Naive thymus-derived CD4-positive, alpha-beta T cell (primary cell): ENCODE measurements at regions of chr12 and their contacts with region 1.

Region 1: GRCh38 chr12:110403146-110403975 is at the start of gene ANAPC7:
- DNase-seq: peak; percentile 74 to 90 (median 87)
- ATAC-seq: peak; percentile 98
- H3K4me3 ChIP-seq: peak within 1 kb of the TSS; percentile 99
- H3K4me3 Mint-ChIP-seq: peak within 1 kb of the TSS in 9 of 10 donors; percentile 96 to 100 (median 98)
- H3K27ac ChIP-seq: peak within 1 kb of the TSS; percentile 81
- H3K27ac Mint-ChIP-seq: peak within 1 kb of the TSS; percentile 97 to 100 (median 99)
- H3K4me1 ChIP-seq: peaks cover 6 to 15% of the 10 kb centered on the region in 2 donors
- H3K4me1 Mint-ChIP-seq: peaks cover 15 to 50% (median 29%) of the 10 kb centered on the region in 7 donors
- H3K27me3 ChIP-seq: no peaks in the 10 kb centered on the region
- H3K27me3 Mint-ChIP-seq: no peaks in the 10 kb centered on the region
- total RNA-seq, gene ANAPC7: 40.9 to 71.7 (median 59.7) TPM

Region 2: DNA sequence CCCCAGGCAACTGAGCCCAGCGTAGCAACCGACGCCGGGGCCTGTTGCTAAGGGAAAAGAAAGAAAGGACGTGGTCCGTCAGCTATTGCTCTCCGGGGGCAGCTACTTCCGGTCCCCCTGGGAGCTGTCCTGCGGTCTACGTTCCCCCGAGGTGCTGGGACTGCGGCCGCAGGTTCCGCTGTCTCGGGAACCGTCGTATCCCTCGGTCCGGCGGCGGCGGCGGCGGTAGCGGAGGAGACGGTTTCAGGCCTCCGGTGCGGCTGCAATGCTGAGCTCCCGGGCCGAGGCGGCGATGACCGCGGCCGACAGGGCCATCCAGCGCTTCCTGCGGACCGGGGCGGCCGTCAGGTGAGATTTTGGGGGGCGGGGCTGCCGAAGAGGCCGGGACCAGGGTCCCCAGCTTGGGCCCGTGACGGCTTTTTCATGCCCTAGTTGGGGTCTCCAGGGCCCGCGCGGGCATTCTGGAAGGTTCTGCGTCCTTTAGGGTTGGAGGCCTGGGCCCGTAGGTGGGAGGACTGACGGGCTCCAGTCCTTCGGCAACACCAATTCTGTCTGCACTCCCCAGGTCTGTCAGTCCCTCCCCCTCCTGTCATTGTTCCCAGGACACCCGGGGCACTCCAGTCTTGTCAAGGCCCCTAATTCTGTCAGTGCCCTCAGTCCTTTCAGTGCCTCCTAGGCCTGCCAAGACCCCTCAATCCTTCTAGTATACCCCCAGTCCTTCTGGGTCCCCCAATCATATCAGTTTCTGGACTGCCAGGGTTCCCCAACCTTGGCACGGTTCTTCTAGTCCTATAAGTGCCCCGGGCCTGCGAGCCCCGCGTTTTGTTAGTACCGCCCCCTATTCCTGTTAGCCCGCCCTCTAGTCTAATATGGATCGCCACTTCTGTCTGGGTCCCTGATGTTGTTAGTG is 1350.7 kb before region 1 on chr12 and contains the start of gene USP30:
- CTCF ChIA-PET with region 1: no interaction called
- POLR2A ChIA-PET with region 1: no interaction called
- intact Hi-C with region 1: loop called in 1 of 2 experiments (anchors 5 kb)
- DNase-seq: peak; percentile 68 to 86 (median 77)
- ATAC-seq: peak; percentile 93
- H3K4me3 ChIP-seq: peak within 1 kb of the TSS; percentile 91
- H3K4me3 Mint-ChIP-seq: peak within 1 kb of the TSS; percentile 86 to 99 (median 96)
- H3K27ac ChIP-seq: peak within 1 kb of the TSS; percentile 89
- H3K27ac Mint-ChIP-seq: peak within 1 kb of the TSS; percentile 89 to 98 (median 95)
- H3K4me1 ChIP-seq: peaks cover 13% of the 10 kb centered on the region in 2 donors
- H3K4me1 Mint-ChIP-seq: peaks cover 14 to 27% (median 17%) of the 10 kb centered on the region in 7 donors
- H3K27me3 ChIP-seq: no peaks in the 10 kb centered on the region
- H3K27me3 Mint-ChIP-seq: no peaks in the 10 kb centered on the region
- total RNA-seq, gene USP30: 7.8 to 15.7 (median 12.9) TPM

Region 3: DNA sequence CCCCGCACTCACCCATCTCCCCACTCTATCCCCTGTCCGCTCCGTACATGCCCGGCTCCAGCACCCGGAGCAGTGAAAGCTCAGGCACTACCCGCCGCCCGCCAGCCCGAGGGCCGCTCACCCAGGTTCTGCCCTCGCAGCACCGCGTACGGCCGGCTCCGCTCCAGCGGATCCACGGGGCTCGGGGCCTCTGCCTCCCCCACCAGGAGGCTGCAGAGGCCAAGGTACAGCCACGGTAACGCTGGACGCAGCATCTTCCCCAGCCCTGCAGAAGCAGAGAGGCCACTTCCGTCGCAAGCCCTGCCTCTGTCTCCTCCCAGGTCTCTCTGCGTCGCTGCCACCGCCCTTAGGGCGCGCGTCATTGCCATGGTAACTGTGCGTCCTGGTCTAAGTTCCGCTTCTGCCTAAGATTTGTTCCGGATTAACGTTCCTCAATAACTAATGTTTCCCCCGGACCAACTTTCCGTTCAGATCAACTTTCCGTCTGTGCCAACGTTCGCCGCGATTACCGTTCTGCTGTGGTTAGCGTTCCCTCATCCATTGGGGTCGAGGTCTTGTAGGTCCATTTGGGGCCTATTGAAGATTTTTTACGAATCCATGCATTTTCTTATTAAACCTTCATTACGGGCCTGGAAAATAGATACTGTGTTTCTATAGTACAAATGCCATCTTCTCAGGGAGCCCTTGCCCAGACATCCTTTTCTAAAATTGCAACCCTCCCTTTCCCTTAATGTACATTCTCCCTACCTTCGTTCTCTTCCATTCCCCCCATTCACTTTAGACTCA is 354.9 kb before region 1 on chr12 and contains the start of gene C12orf76:
- CTCF ChIA-PET with region 1: no interaction called
- POLR2A ChIA-PET with region 1: no interaction called
- intact Hi-C with region 1: loop called in 1 of 2 experiments (anchors 1 kb)
- DNase-seq: peak; percentile 67 to 92 (median 90)
- ATAC-seq: peak; percentile 100
- H3K4me3 ChIP-seq: peak within 1 kb of the TSS; percentile 81
- H3K4me3 Mint-ChIP-seq: peak within 1 kb of the TSS; percentile 84 to 97 (median 93)
- H3K27ac ChIP-seq: peak within 1 kb of the TSS; percentile 77
- H3K27ac Mint-ChIP-seq: peak within 1 kb of the TSS; percentile 90 to 99 (median 96)
- H3K4me1 ChIP-seq: peaks cover 19% of the 10 kb centered on the region in 2 donors
- H3K4me1 Mint-ChIP-seq: peaks cover 16 to 46% (median 34%) of the 10 kb centered on the region in 7 donors
- H3K27me3 ChIP-seq: no peaks in the 10 kb centered on the region
- H3K27me3 Mint-ChIP-seq: no peaks in the 10 kb centered on the region
- total RNA-seq, gene C12orf76: 14.6 to 28.7 (median 27.8) TPM

Region 4: DNA sequence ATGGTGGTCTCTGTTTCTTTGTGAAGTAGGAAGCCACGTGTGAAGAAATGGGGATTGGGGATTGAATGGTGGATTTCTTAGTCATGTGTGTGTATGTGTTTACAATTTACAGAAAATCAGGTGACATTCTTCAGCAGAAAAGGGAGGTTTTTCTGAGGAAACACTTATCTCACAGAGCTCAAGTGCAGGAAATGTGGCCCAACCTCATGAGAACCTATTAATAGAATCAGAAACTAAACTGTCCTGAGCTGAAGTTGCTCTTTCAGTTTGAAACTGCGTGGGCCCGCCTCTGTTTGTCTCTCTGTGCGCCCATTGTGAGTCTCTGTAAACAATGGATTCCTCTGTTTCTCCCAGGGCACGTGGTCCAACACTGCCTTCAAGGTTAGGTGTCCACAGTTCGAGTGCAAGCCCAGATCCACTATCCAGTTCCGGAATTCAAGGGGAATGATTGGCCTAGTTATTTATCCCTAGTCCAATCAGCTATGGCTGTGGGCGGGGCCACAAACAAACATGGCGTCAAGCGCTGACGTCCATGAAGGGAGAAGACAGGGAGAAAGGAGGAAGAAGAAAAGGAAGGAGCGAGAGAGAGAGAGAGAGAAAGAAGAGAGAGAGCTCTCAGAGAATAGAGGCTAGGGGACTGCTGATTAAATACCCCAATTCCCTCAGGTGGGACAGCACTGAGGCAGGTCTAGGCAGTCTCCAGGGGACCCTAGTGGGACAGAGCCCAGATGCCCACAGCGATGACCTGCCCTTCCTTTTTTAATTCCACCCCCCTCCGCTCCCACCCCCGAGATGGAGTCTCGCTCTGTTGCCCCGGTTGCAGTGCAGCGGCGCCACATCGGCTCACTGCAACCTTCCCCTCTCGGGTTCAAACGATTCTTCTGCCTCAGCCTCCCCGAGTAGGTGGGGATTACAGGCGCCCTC is 323.6 kb before region 1 on chr12:
- CTCF ChIA-PET with region 1: no interaction called
- POLR2A ChIA-PET with region 1: no interaction called
- intact Hi-C with region 1: loop called in 1 of 2 experiments (anchors 10 kb)
- DNase-seq: peak; percentile 44 to 83 (median 75)
- ATAC-seq: peak; percentile 96
- H3K4me3 ChIP-seq: peak overlapping the region; percentile 42
- H3K4me3 Mint-ChIP-seq: peak overlapping the region; percentile 76 to 94 (median 86)
- H3K27ac ChIP-seq: peak overlapping the region; percentile 71
- H3K27ac Mint-ChIP-seq: peak overlapping the region; percentile 92 to 99 (median 98)
- H3K4me1 ChIP-seq: peaks cover 9 to 21% of the 10 kb centered on the region in 2 donors
- H3K4me1 Mint-ChIP-seq: peaks cover 13 to 47% (median 26%) of the 10 kb centered on the region in 7 donors
- H3K27me3 ChIP-seq: no peaks in the 10 kb centered on the region
- H3K27me3 Mint-ChIP-seq: peaks cover 0 to 5% (median 0%) of the 10 kb centered on the region in 5 donors

Region 5: DNA sequence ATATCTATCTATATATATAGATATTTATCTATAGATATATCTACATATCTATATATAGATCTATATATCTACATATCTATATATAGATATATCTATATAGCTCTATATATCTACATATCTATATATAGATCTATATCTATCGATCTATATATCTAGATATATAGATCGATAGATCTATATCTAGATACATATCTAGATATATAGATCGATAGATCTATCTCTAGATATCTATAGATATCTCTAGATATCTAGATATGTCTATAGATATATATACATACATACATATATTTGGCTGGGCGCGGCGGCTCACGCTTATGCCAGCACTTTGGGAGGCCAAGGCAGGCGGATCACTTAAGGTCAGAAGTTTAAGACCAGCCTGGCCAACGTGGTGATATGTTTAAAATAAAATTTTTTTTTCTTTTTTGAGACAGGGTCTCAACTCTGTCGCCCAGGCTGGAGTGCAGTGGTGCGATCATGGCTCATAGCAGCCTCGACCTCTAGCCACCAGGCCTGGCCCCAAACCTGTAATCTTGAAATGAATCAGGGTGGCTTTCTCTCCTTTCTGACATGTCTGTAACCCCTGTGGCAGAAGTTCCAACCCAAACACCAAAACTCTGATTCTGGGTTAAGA is 28.7 kb after region 1 on chr12:
- CTCF ChIA-PET with region 1: interaction called, 6 read pairs
- POLR2A ChIA-PET with region 1: no interaction called
- intact Hi-C with region 1: loop called (anchors 1 kb)
- DNase-seq: no peak
- ATAC-seq: no peak
- H3K4me3 ChIP-seq: no peak overlapping the region
- H3K4me3 Mint-ChIP-seq: peak overlapping the region in 4 of 10 donors; percentile 91 to 100 (median 96)
- H3K27ac ChIP-seq: no peak overlapping the region
- H3K27ac Mint-ChIP-seq: peak overlapping the region in 3 of 9 donors; percentile 96 to 99 (median 98)
- H3K4me1 ChIP-seq: no peaks in the 10 kb centered on the region
- H3K4me1 Mint-ChIP-seq: peaks cover 0 to 5% (median 0%) of the 10 kb centered on the region in 7 donors
- H3K27me3 ChIP-seq: no peaks in the 10 kb centered on the region
- H3K27me3 Mint-ChIP-seq: peaks cover 0 to 3% (median 0%) of the 10 kb centered on the region in 5 donors

Region 6: DNA sequence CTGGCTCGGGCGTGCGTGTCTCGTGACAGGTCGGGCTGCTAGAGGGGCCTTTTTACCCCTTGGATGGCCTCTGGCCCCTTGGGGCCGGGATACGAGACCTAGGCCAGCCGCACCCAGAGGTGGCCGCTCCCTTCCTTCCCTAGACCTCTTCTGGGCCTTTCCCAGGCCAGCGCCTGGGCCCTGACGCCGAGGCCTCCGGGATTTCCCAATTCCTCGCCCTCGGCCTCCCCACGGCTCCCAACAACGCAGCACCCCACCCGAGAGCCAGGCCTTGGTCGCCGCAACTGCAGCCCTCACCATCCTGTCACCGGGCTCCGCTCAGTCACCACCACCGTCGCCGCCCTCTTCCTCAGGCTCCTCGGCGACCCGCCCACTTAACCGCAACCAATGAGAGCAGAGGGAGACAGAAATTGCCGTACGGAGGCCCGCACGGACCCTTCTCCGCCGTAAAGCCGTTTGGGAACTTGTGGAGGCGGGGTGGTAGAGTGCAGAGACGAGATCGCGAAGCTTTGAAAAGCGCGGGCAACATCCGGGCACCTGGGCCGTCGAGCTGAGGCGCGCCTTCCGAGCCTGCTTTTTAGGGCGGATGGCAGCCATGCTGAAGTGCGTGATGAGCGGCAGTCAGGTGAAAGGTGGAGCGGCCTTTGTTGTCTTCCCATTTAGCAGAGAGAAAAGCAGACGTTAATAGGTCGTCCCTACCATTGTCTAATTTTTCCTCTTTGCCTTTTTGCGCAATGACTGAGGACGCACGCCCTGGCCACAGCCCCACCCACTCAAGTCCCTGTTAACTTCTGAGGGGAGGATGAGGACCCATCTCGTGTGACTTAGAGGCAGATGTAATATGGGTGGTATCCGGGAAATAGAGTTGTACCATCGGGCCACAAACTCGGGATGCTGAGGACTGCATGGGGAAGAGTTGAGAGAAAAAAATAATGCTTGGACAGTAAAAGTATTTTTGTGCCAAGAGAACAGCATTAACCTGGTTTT is 98.7 kb after region 1 on chr12 and contains the starts of genes RAD9B and VPS29:
- CTCF ChIA-PET with region 1: no interaction called
- POLR2A ChIA-PET with region 1: no interaction called
- intact Hi-C with region 1: loop called in 1 of 2 experiments (anchors 1 kb)
- DNase-seq: peak; percentile 91 to 100 (median 99)
- ATAC-seq: peak; percentile 98
- H3K4me3 ChIP-seq: peak within 1 kb of the TSS; percentile 86
- H3K4me3 Mint-ChIP-seq: peak within 1 kb of the TSS; percentile 88 to 100 (median 97)
- H3K27ac ChIP-seq: peak within 1 kb of the TSS; percentile 89
- H3K27ac Mint-ChIP-seq: peak within 1 kb of the TSS; percentile 93 to 100 (median 97)
- H3K4me1 ChIP-seq: peaks cover 20 to 22% of the 10 kb centered on the region in 2 donors
- H3K4me1 Mint-ChIP-seq: peaks cover 22 to 52% (median 39%) of the 10 kb centered on the region in 7 donors
- H3K27me3 ChIP-seq: no peaks in the 10 kb centered on the region
- H3K27me3 Mint-ChIP-seq: peaks cover 0 to 3% (median 0%) of the 10 kb centered on the region in 5 donors
- total RNA-seq, gene RAD9B: 0.60 to 2.9 (median 1.1) TPM
- total RNA-seq, gene VPS29: 78.5 to 131 (median 115) TPM